Stomach (tissue), 19 donors: ENCODE measurements at regions of chr1 and their contacts with region 1.

Region 1: DNA sequence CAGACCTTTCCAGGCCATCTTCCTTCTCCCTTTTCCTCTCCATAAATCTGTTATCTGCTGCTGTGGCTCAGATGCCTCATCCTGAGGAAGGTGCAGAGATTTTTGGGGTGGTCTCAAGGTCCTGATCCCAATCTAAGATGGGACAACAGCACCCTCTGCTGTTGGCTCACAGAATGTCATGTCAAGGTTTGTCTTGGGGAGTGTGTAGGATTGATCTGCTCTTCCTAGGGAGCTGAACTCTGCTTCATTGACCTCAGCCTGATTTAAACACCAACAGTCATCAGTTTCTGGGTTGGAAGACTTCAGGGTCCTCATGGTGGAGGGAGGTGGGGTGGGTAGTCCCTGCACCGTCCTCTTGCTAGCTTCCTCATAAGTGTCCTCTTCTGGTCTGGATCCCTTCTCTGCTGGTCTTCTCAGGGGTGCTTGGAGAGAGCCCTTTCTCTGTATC is 62.8 kb upstream of the LAX1 start:
- DNase-seq: peak; percentile 58 to 84
- H3K4me3 ChIP-seq: no peak overlapping the region
- H3K27ac ChIP-seq: peak overlapping the region in 2 of 5 donors; percentile 38 to 47
- H3K4me1 ChIP-seq: peaks cover 0 to 19% (median 13%) of the 10 kb centered on the region in 4 donors
- H3K27me3 ChIP-seq: no peaks in the 10 kb centered on the region
- CTCF ChIP-seq: peak in 6 of 7 experiments; percentile 30 to 98 (median 83)
- EP300 ChIP-seq: no peak
- POLR2A ChIP-seq: no peak

Region 2: GRCh38 chr1:203206129-203206687 is 495.9 kb before region 1 on chr1:
- intact Hi-C with region 1: no loop called
- DNase-seq: no peak
- H3K4me3 ChIP-seq: no peak overlapping the region
- H3K27ac ChIP-seq: no peak overlapping the region
- H3K4me1 ChIP-seq: peaks cover 0 to 11% (median 1%) of the 10 kb centered on the region in 4 donors
- H3K27me3 ChIP-seq: peaks cover 0 to 9% (median 0%) of the 10 kb centered on the region in 3 donors
- CTCF ChIP-seq: no peak
- EP300 ChIP-seq: no peak
- POLR2A ChIP-seq: no peak

Region 3: GRCh38 chr1:203504397-203505250 is 197.5 kb before region 1 on chr1:
- intact Hi-C with region 1: loop called (anchors 5 kb)
- DNase-seq: peak; percentile 91 to 92
- H3K4me3 ChIP-seq: no peak overlapping the region
- H3K27ac ChIP-seq: peak overlapping the region in 1 of 5 donors; percentile 39
- H3K4me1 ChIP-seq: peaks cover 15 to 40% (median 26%) of the 10 kb centered on the region in 4 donors
- H3K27me3 ChIP-seq: no peaks in the 10 kb centered on the region
- CTCF ChIP-seq: peak in 5 of 7 experiments; percentile 64 to 93 (median 89)
- EP300 ChIP-seq: no peak
- POLR2A ChIP-seq: no peak